ENCODE measurements at regions of chr9 and their contacts with region 1.

Region 1: DNA sequence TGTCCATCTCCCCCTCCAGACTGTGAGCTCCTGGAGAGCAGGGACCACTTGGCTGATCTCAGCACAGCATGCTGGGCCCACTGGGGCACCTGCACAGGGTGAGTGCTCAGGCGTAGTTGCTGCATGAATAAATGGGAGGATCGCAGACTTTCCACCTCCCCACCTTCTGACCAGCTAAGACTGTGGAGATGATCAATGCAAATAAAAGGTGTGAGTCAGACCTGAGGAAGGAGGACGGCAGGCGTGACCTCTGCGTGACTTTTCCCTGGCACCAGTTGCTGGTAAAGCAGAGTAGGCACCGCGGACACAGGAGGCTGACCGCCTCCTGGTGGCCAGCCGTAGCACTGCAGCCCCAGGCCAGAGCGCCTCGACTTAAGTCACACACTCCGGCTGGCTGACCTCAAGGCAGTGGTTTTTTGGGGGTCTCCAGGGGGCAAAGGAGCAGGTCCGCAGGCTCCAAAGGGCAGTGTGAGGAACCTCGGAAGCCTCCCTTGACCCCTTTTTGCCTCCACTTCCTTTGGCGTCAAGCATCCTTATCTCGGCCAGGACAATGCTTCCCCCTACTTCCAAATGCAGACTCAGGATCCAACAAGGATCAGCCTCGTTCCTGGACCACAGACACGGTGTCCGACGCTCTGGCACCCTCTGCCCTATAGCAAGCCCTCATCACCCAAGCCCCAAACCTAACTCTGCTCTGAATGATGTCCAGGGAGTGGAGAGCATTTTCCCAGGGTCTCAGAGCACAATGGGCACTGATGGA is 12.7 kb upstream of the TDRD7 start:
- DNase-seq: peak; percentile 82 to 88 (median 86)
- ATAC-seq: peak; percentile 99
- H3K4me3 ChIP-seq: no peak overlapping the region
- H3K4me1 ChIP-seq: no peaks in the 10 kb centered on the region
- CTCF ChIP-seq: peak; percentile 98

Region 2: DNA sequence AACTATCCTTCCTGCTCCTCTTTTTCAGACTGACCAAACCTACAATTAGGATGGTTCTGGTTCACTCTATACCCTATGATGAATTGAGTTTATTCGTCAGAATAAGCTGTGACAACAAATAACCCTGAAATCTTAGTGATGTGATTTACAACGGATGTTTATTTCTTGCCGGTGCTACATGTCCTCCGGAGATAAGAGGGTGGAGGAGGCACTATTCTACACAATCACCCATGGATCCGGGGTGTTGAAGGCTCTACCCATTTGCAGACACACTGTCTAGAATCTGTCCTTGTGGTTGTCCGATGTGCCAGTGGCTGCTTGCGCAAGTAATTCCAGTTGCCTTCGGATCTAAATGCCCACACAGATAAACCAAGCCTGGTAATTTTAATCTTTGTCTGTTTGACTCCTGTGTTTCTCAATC is 824.2 kb before region 1 on chr9:
- intact Hi-C with region 1: no loop called
- DNase-seq: no peak
- ATAC-seq: no peak
- H3K4me3 ChIP-seq: no peak overlapping the region
- H3K4me1 ChIP-seq: no peaks in the 10 kb centered on the region
- CTCF ChIP-seq: no peak

Region 3: DNA sequence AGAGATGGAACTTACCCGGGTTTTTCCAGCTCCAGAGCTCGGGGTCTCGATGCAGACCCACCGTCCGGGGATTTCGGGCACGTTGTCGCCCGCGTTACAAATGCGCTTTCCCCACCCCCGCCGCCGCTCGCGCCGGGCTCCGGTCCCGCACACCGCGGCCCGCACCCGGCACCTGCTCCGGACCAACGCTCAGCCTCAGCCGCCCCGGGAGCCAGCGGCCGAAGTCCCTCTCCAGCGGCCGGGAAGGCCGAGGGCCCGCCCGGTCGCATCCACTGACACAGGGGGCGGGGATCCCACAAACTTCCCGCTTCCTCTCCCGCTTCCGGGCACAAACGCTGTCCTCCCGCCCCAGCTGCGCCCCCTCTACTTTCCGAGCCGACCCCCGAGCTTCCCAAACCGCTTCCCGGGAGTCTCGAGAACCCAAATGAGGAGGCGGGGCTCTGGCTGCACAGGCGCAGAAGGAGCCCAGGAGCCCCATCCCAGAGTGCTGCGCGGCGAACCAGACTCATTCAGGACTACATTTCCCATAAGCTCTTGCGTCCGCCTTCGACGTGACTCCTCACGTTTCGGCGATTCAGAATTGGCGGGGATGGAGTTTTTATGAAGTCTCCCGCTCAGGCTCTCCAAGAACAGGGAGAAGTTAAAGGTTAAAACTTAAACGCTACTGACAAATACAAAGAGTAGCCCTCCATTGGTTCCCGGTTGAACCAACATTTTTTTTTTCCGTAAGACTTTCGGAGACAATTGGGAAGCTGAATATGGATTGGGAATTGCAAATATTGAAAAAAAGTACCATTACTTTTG is 544.9 kb before region 1 on chr9 and contains the start of gene ZNF782:
- intact Hi-C with region 1: loop called in 1 of 2 experiments (anchors 10 kb)
- DNase-seq: peak; percentile 93 to 95 (median 94)
- ATAC-seq: peak; percentile 97
- H3K4me3 ChIP-seq: peak within 1 kb of the TSS; percentile 59
- H3K4me1 ChIP-seq: peaks cover 18% of the 10 kb centered on the region
- CTCF ChIP-seq: no peak
- total RNA-seq, gene ZNF782: 5.5 to 9.6 (median 8.2) TPM

Region 4: GRCh38 chr9:96859461-96860198 is 539.5 kb before region 1 on chr9:
- intact Hi-C with region 1: loop called (anchors 5 to 10 kb)
- DNase-seq: no peak
- ATAC-seq: no peak
- H3K4me3 ChIP-seq: no peak overlapping the region
- H3K4me1 ChIP-seq: peaks cover 7% of the 10 kb centered on the region
- CTCF ChIP-seq: no peak

Measured in mucosa of descending colon (tissue), 3 donors.